Heart right ventricle (tissue), 16 donors: ENCODE measurements at regions of chr6 and their contacts with region 1.

Region 1: GRCh38 chr6:140436013-140436811 is 1061.8 kb upstream of the CITED2 start:
- DNase-seq: no peak
- ATAC-seq: no peak
- H3K4me3 ChIP-seq: no peak overlapping the region
- H3K27ac ChIP-seq: no peak overlapping the region
- H3K4me1 ChIP-seq: peaks cover 0 to 33% (median 10%) of the 10 kb centered on the region in 9 donors
- H3K27me3 ChIP-seq: no peaks in the 10 kb centered on the region
- CTCF ChIP-seq: no peak

Region 2: DNA sequence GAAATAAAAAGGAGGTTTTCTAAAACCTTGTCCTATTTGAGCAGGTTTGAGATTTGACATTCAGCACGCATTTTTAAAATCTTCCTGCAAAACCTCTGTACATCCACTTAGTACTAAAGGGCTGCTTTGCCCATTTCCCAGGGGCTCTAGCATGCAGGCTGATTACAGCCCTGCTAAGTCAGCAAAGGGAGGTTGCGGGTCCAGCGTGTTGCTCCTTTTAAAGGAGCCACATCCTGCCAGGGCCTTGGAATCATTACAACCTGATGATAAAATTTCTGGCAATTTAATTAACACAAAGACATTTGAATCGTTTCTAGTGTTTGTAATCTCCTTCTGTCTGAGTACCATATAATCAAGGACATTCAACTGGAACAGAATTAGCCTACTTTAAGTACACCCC is 606.6 kb before region 1 on chr6:
- intact Hi-C with region 1: no loop called
- DNase-seq: no peak
- ATAC-seq: no peak
- H3K4me3 ChIP-seq: no peak overlapping the region
- H3K27ac ChIP-seq: no peak overlapping the region
- H3K4me1 ChIP-seq: peaks cover 0 to 16% (median 10%) of the 10 kb centered on the region in 9 donors
- H3K27me3 ChIP-seq: no peaks in the 10 kb centered on the region
- CTCF ChIP-seq: no peak

Region 3: GRCh38 chr6:139881728-139882211 is 554.4 kb before region 1 on chr6:
- intact Hi-C with region 1: loop called in 8 of 10 experiments (anchors 2 to 10 kb)
- DNase-seq: peak in 1 of 2 donors; percentile 15
- ATAC-seq: peak; percentile 30 to 80 (median 70)
- H3K4me3 ChIP-seq: peak overlapping the region in 1 of 10 donors; percentile 14
- H3K27ac ChIP-seq: peak overlapping the region in 8 of 10 donors; percentile 7 to 87 (median 60)
- H3K4me1 ChIP-seq: peaks cover 7 to 47% (median 20%) of the 10 kb centered on the region in 9 donors
- H3K27me3 ChIP-seq: no peaks in the 10 kb centered on the region
- CTCF ChIP-seq: peak; percentile 53 to 71 (median 60)

Region 4: GRCh38 chr6:139888681-139889122 is 547.5 kb before region 1 on chr6:
- intact Hi-C with region 1: loop called in 7 of 10 experiments (anchors 5 to 10 kb)
- DNase-seq: no peak
- ATAC-seq: no peak
- H3K4me3 ChIP-seq: no peak overlapping the region
- H3K27ac ChIP-seq: no peak overlapping the region
- H3K4me1 ChIP-seq: peaks cover 0 to 24% (median 2%) of the 10 kb centered on the region in 9 donors
- H3K27me3 ChIP-seq: no peaks in the 10 kb centered on the region
- CTCF ChIP-seq: no peak

Region 5: DNA sequence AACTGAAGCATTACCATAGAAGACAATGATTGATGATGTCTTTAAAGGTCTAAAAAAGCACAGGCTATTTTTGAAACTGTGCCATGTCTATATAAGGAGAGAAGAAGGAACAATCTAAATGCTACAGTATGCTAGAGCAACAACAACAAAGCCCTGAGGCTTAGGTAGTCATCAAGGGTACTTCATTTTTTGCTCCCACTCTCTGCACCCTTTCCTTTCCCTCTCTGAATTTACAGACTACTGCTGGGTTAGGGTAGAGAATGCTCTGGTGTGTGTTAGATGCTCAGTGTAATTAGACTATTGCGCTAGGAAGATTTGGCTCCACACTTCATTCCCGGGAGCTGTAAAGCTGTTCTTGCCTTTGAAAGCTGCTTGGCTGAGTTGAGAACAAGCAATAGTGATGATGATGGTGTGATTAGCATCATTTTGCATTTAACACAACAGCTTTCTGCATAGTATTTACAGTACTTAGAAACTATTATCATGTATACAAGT is 200.7 kb after region 1 on chr6:
- intact Hi-C with region 1: no loop called
- DNase-seq: no peak
- ATAC-seq: peak in 1 of 8 donors; percentile 12
- H3K4me3 ChIP-seq: no peak overlapping the region
- H3K27ac ChIP-seq: no peak overlapping the region
- H3K4me1 ChIP-seq: no peaks in the 10 kb centered on the region
- H3K27me3 ChIP-seq: no peaks in the 10 kb centered on the region
- CTCF ChIP-seq: no peak